ENCODE measurements at regions of chr2 and their contacts with region 1.

Region 1: DNA sequence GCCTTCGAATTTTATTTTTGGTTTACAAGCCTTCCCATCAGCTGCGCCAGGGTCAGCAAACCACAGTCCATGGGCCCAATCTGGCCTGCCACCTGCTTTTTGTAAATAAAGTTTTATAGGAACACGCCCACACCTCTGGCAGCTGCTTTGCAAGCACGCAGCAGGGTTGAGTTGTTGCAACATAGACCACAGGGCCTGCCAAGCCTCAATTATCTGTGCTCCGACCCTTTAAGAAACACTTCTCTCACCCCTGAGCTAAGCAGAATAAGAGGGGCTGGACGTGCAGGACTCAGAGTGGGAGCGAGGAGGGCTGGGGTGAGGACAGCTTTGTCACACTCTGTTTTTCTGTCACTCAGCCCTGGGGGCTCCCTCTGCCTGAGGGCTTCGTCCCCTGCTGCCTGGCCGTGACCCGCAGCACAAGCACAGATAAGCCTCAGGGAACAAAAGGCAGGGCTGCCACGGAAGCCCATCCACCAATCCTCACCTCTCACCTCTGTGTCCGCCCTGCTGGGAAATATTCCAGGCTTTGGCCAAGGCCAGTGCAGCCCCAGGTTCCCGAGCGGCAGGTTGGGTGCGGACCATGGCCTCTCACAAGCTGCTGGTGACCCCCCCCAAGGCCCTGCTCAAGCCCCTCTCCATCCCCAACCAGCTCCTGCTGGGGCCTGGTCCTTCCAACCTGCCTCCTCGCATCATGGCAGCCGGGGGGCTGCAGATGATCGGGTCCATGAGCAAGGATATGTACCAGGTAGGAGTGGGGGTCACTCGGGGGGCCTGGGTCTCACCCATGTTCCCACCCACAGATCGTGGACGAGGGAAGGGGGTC is at the start of gene AGXT:
- DNase-seq: no peak
- ATAC-seq: no peak
- H3K4me3 ChIP-seq: no peak within 1 kb of the TSS
- H3K27ac ChIP-seq: no peak within 1 kb of the TSS
- H3K4me1 ChIP-seq: no peaks in the 10 kb centered on the region
- H3K27me3 ChIP-seq: no peaks in the 10 kb centered on the region
- total RNA-seq, gene AGXT: not detected

Region 2: GRCh38 chr2:240704651-240705050 is 163.8 kb before region 1 on chr2:
- intact Hi-C with region 1: no loop called
- DNase-seq: peak in 2 of 3 donors; percentile 33 to 37
- ATAC-seq: no peak
- H3K4me3 ChIP-seq: no peak overlapping the region
- H3K27ac ChIP-seq: no peak overlapping the region
- H3K4me1 ChIP-seq: no peaks in the 10 kb centered on the region
- H3K27me3 ChIP-seq: no peaks in the 10 kb centered on the region

Region 3: DNA sequence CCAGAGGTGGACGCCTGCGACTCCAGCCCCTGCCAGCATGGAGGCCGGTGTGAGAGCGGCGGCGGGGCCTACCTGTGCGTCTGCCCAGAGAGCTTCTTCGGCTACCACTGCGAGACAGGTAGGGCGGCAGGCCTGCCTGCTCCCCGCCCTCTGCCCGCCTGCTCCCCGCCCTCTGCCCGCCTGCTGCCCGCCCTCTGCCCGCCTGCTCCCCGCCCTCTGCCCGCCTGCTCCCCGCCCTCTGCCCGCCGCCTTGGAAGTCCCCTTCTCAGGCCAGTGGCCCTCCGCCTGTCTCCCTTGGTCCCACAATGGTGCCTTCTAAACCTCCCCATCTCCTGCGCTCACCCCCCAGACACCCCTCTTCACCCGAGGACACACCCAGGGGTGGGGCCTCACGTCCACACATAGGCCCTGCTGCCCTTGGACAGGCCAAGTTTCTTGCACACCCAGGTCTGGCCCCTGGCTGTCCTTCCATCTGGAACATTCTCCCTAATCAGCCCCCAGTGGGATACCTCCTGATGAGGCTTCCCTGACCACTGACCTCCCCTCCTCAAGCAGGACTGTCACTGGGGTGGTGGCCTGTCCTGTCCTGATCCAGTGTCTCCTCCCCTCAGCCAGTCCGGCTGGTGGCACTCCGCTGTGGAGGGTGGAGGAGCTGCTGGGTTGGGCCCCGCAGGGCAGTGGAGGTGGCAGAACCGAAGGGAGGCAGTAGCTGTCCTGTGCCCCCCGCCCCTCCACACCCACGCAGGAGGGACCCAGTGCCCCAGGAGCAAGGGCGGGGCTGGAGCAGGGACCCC is 195.7 kb after region 1 on chr2:
- intact Hi-C with region 1: loop called in 1 of 4 experiments (anchors 10 kb)
- DNase-seq: peak in 2 of 3 donors; percentile 66 to 69
- ATAC-seq: peak; percentile 42
- H3K4me3 ChIP-seq: no peak overlapping the region
- H3K27ac ChIP-seq: no peak overlapping the region
- H3K4me1 ChIP-seq: no peaks in the 10 kb centered on the region
- H3K27me3 ChIP-seq: no peaks in the 10 kb centered on the region